CD8-positive, alpha-beta T cell (primary cell): ENCODE measurements at regions of chrX and their contacts with region 1.

Region 1: DNA sequence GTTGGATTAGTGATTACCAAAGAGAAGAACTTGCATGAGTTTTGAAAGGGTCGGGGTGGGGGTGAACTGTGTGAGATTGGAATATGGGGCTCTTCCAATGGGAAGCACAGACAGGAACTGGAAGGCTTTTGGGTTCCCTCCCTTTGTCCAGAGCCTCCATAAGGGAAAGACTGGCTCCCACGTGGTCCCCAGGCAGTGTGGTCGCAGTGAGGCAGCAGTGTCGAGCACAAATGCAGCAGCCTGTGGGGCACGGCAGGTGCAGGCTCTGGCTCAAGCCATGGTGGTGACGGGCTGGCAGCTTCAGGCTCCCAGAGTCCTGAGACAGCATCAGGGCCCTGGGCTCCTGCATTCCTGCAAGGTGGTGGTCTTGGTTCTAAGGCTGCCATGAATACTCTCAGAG is 45.5 kb downstream of the VCX2 start:
- DNase-seq: no peak
- ATAC-seq: no peak
- H3K4me3 ChIP-seq: no peak overlapping the region
- H3K4me3 Mint-ChIP-seq: no peak overlapping the region
- H3K27ac ChIP-seq: no peak overlapping the region
- H3K27ac Mint-ChIP-seq: no peak overlapping the region
- H3K4me1 ChIP-seq: no peaks in the 10 kb centered on the region
- H3K4me1 Mint-ChIP-seq: no peaks in the 10 kb centered on the region
- H3K27me3 ChIP-seq: no peaks in the 10 kb centered on the region
- H3K27me3 Mint-ChIP-seq: no peaks in the 10 kb centered on the region
- CTCF ChIP-seq: no peak

Region 2: DNA sequence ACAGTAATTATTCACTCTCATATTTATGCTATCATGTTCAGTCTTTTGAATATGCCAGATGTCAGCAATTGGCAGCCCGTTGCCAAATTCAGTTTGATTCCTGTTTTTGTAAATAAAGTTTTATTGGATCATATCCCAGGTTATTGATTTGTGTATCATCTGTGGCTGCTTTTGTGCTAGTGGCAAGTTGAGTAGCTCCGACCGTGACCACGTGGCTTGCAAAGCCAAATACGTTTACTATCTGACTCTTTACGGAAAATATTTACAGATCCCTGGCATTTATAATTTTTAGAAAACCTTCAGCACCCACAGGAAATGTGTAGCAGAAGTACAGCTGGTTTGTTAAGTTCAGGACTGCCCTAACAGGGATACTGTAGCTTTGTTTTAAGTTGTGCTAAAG is 21.9 kb before region 1 on chrX:
- CTCF ChIA-PET with region 1: no interaction called
- POLR2A ChIA-PET with region 1: no interaction called
- intact Hi-C with region 1: loop called in 1 of 2 experiments (anchors 1 kb)
- DNase-seq: no peak
- ATAC-seq: no peak
- H3K4me3 ChIP-seq: no peak overlapping the region
- H3K4me3 Mint-ChIP-seq: no peak overlapping the region
- H3K27ac ChIP-seq: no peak overlapping the region
- H3K27ac Mint-ChIP-seq: no peak overlapping the region
- H3K4me1 ChIP-seq: no peaks in the 10 kb centered on the region
- H3K4me1 Mint-ChIP-seq: no peaks in the 10 kb centered on the region
- H3K27me3 ChIP-seq: no peaks in the 10 kb centered on the region
- H3K27me3 Mint-ChIP-seq: no peaks in the 10 kb centered on the region
- CTCF ChIP-seq: no peak

Region 3: GRCh38 chrX:8887004-8887403 is 761.4 kb after region 1 on chrX:
- CTCF ChIA-PET with region 1: no interaction called
- POLR2A ChIA-PET with region 1: no interaction called
- intact Hi-C with region 1: no loop called
- DNase-seq: no peak
- ATAC-seq: no peak
- H3K4me3 ChIP-seq: no peak overlapping the region
- H3K4me3 Mint-ChIP-seq: no peak overlapping the region
- H3K27ac ChIP-seq: no peak overlapping the region
- H3K27ac Mint-ChIP-seq: no peak overlapping the region
- H3K4me1 ChIP-seq: no peaks in the 10 kb centered on the region
- H3K4me1 Mint-ChIP-seq: peaks cover 3% of the 10 kb centered on the region
- H3K27me3 ChIP-seq: no peaks in the 10 kb centered on the region
- H3K27me3 Mint-ChIP-seq: no peaks in the 10 kb centered on the region
- CTCF ChIP-seq: no peak